CD4-positive, alpha-beta memory T cell (primary cell): ENCODE measurements at regions of chr6 and their contacts with region 1.

Region 1: DNA sequence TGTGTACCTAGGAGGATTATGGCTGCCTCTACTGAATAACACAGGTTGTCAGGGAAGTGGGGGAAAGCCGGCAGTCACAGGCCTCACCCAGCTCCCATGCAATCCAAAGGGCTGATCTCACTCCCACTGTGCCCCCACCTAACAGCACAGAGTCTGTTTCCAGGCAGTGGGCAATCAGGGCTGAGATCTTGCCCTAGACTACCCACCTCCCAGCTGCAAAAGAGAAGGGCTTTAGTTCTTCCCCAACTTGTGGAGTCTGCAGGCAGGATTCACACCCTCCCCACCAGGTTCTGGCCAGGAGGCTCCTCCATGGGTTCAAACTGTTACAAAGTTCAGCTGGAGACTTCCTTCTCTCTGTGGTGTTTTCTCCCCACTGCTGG is 66.0 kb upstream of the OLIG3 start:
- DNase-seq: no peak
- H3K4me3 ChIP-seq: peak overlapping the region in 1 of 2 donors; percentile 10
- H3K4me3 Mint-ChIP-seq: peak overlapping the region in 7 of 8 donors; percentile 70 to 89 (median 78)
- H3K27ac ChIP-seq: no peak overlapping the region
- H3K27ac Mint-ChIP-seq: peak overlapping the region in 6 of 7 donors; percentile 79 to 93 (median 88)
- H3K4me1 ChIP-seq: peaks cover 36% of the 10 kb centered on the region
- H3K4me1 Mint-ChIP-seq: peaks cover 31 to 67% (median 47%) of the 10 kb centered on the region in 4 donors
- H3K27me3 ChIP-seq: no peaks in the 10 kb centered on the region
- H3K27me3 Mint-ChIP-seq: peaks cover 0 to 2% of the 10 kb centered on the region in 2 donors

Region 2: DNA sequence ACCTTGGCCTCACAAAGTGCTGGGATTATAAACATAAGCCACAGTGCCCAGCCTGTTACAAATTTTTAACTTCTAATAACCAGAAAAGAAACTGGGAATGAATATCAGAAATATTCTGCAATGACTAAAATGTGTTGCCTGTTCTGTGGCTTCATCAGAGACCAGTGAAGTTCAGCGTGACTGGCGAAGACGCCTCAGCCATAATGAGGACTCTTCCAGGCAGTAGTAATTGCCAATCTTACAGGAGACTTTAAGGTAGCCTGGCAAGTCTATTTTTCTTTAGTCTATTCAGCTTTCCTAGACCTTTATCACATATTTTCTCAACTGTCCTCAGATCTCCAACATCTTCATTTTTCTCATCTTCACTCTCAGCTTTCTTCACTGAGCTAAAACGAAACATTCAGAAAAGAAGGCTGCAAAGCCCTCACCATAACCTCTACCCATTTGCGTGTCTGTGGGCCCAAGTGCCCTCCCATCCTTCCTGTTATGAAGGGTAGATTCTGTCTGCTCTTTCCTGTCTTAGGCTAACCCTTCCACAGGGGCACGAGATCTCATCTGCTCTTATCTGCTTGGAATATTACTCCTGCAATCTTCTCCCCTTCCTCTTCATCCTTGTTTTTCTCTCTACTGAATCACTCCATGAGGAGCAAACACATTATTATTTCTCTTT is 23.9 kb before region 1 on chr6:
- CTCF ChIA-PET with region 1: interaction called, 12 read pairs
- POLR2A ChIA-PET with region 1: interaction called, 38 read pairs
- intact Hi-C with region 1: loop called (anchors 1 kb)
- DNase-seq: peak in 4 of 5 donors; percentile 14 to 63 (median 52)
- H3K4me3 ChIP-seq: no peak overlapping the region
- H3K4me3 Mint-ChIP-seq: no peak overlapping the region
- H3K27ac ChIP-seq: no peak overlapping the region
- H3K27ac Mint-ChIP-seq: no peak overlapping the region
- H3K4me1 ChIP-seq: peaks cover 30% of the 10 kb centered on the region
- H3K4me1 Mint-ChIP-seq: peaks cover 0 to 7% (median 0%) of the 10 kb centered on the region in 4 donors
- H3K27me3 ChIP-seq: no peaks in the 10 kb centered on the region
- H3K27me3 Mint-ChIP-seq: peaks cover 2 to 3% of the 10 kb centered on the region in 2 donors